CD4-positive, alpha-beta T cell (primary cell): ENCODE measurements at regions of chr5 and their contacts with region 1.

Region 1: GRCh38 chr5:59367791-59368394 is 525.6 kb downstream of the PDE4D start:
- DNase-seq: peak; percentile 4 to 65 (median 26)
- ATAC-seq: peak; percentile 48
- H3K4me3 ChIP-seq: no peak overlapping the region
- H3K4me3 Mint-ChIP-seq: no peak overlapping the region
- H3K27ac ChIP-seq: no peak overlapping the region
- H3K27ac Mint-ChIP-seq: no peak overlapping the region
- H3K4me1 ChIP-seq: no peaks in the 10 kb centered on the region
- H3K4me1 Mint-ChIP-seq: no peaks in the 10 kb centered on the region
- H3K27me3 ChIP-seq: peaks cover 0 to 5% of the 10 kb centered on the region in 2 experiments
- H3K27me3 Mint-ChIP-seq: peaks cover 22% of the 10 kb centered on the region
- CTCF ChIP-seq: peak; percentile 72

Region 2: GRCh38 chr5:58886315-58887207 is 481.3 kb before region 1 on chr5:
- CTCF ChIA-PET with region 1: interaction called, 5 read pairs
- POLR2A ChIA-PET with region 1: no interaction called
- intact Hi-C with region 1: loop called (anchors 2 kb)
- DNase-seq: peak; percentile 36 to 83 (median 52)
- ATAC-seq: peak; percentile 81
- H3K4me3 ChIP-seq: no peak overlapping the region
- H3K4me3 Mint-ChIP-seq: no peak overlapping the region
- H3K27ac ChIP-seq: no peak overlapping the region
- H3K27ac Mint-ChIP-seq: no peak overlapping the region
- H3K4me1 ChIP-seq: peaks cover 20% of the 10 kb centered on the region
- H3K4me1 Mint-ChIP-seq: peaks cover 32% of the 10 kb centered on the region
- H3K27me3 ChIP-seq: peaks cover 0 to 4% of the 10 kb centered on the region in 2 experiments
- H3K27me3 Mint-ChIP-seq: peaks cover 5% of the 10 kb centered on the region
- CTCF ChIP-seq: peak; percentile 92

Region 3: DNA sequence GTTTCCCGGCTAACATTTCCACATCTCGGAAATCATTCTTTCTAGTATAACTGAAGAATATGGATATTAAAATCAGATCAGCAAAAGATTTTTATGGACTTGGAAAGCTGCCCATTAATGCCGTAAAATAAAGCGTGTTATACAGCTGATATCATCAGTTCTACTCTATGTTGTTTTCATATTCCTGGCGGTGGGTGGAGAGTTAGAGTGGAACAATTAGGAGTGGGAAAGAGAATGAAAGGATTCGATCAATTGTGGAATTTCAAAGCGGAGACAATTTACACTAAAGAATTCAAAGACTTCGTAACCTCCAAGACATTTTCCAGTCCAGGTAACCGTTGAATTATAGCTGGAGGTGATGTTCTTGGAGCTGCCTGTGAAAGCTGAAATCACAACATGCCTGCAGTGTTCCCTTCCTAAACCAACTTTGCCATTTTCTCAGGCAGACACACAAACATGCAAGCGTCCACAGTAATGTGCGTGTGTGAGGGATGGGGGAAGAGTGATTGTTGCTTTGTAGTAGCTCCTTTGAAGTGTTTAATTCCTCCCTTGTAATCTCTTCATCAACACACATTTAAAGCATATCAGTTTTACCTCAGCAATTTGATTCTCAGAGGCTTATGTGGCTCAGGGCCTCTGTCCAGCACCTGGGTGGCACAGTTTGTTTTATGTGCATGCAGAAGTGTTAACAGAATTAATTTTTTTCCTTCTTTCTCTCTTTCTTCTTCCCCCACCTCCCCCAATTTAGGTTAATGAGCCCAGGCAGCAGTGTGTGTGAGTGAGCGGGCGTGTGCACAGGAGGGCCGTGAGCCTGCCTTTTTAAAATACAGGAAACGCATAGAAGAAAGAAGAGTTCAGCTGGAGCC is 241.0 kb before region 1 on chr5:
- CTCF ChIA-PET with region 1: no interaction called
- POLR2A ChIA-PET with region 1: no interaction called
- intact Hi-C with region 1: no loop called
- DNase-seq: peak in 3 of 14 experiments; percentile 5 to 81 (median 75)
- ATAC-seq: peak; percentile 5
- H3K4me3 ChIP-seq: peak overlapping the region; percentile 51
- H3K4me3 Mint-ChIP-seq: no peak overlapping the region
- H3K27ac ChIP-seq: peak overlapping the region; percentile 56 to 68
- H3K27ac Mint-ChIP-seq: no peak overlapping the region
- H3K4me1 ChIP-seq: peaks cover 36% of the 10 kb centered on the region
- H3K4me1 Mint-ChIP-seq: peaks cover 13% of the 10 kb centered on the region
- H3K27me3 ChIP-seq: no peaks in the 10 kb centered on the region
- H3K27me3 Mint-ChIP-seq: no peaks in the 10 kb centered on the region
- CTCF ChIP-seq: no peak

Region 4: DNA sequence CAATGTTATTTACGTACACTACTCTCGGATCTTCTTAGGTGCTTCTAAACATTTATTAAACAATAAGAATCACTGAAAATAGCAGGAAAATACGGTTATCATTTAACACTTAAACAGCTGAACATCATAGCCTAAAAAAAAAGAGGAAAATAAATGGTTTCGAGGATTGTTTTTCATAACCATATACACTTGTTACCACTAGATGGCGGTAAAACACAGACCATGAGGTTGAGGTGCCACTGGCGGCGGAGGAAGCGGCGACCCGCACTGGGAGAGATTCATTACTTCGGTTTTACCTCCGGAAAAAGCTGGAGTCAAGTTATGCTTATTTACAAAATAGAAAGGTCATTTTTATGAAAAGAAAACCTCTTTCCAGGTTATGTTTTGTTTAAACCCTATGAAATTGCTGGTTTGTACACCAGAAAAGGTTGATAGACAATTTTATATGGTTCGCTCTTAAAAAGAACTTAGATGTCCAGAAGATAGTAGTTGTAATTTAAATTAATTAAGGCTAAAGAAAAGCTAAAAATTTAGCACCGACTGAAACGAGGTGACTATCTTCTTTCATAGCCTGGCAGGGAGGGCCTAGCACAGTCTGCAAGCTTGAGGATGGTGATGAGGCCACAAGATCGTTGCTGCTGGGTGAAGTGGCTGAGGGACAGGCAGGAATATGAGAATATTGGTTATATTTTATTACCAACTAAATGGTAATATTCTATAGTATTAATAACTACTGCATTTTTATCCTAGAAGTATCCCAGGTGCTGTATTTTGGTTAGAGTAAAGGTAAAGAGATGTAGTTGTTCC is 179.3 kb before region 1 on chr5:
- CTCF ChIA-PET with region 1: interaction called, 4 read pairs
- POLR2A ChIA-PET with region 1: no interaction called
- intact Hi-C with region 1: loop called (anchors 1 kb)
- DNase-seq: peak; percentile 26 to 81 (median 48)
- ATAC-seq: peak; percentile 69
- H3K4me3 ChIP-seq: no peak overlapping the region
- H3K4me3 Mint-ChIP-seq: no peak overlapping the region
- H3K27ac ChIP-seq: no peak overlapping the region
- H3K27ac Mint-ChIP-seq: no peak overlapping the region
- H3K4me1 ChIP-seq: no peaks in the 10 kb centered on the region
- H3K4me1 Mint-ChIP-seq: peaks cover 5% of the 10 kb centered on the region
- H3K27me3 ChIP-seq: peaks cover 0 to 5% of the 10 kb centered on the region in 2 experiments
- H3K27me3 Mint-ChIP-seq: peaks cover 19% of the 10 kb centered on the region
- CTCF ChIP-seq: peak; percentile 95